Activated naive CD4-positive, alpha-beta T cell treated with anti-CD3 and anti-CD28 coated beads, Interleukin-2, amount 10 ng/mL, durations not matched to agents 7 days and 5 days (primary cell): ENCODE measurements at regions of chr2 and their contacts with region 1.

Region 1: GRCh38 chr2:105369747-105370690 is 28.8 kb downstream of the FHL2 start:
- DNase-seq: peak; percentile 93
- H3K4me3 Mint-ChIP-seq: no peak overlapping the region
- H3K27ac Mint-ChIP-seq: no peak overlapping the region
- H3K4me1 Mint-ChIP-seq: peaks cover 17% of the 10 kb centered on the region
- H3K27me3 Mint-ChIP-seq: peaks cover 8% of the 10 kb centered on the region

Region 2: GRCh38 chr2:105521205-105521604 is 151.2 kb after region 1 on chr2:
- CTCF ChIA-PET with region 1: interaction called, 65 read pairs
- DNase-seq: no peak
- H3K4me3 Mint-ChIP-seq: no peak overlapping the region
- H3K27ac Mint-ChIP-seq: no peak overlapping the region
- H3K4me1 Mint-ChIP-seq: no peaks in the 10 kb centered on the region
- H3K27me3 Mint-ChIP-seq: peaks cover 12% of the 10 kb centered on the region

Region 3: DNA sequence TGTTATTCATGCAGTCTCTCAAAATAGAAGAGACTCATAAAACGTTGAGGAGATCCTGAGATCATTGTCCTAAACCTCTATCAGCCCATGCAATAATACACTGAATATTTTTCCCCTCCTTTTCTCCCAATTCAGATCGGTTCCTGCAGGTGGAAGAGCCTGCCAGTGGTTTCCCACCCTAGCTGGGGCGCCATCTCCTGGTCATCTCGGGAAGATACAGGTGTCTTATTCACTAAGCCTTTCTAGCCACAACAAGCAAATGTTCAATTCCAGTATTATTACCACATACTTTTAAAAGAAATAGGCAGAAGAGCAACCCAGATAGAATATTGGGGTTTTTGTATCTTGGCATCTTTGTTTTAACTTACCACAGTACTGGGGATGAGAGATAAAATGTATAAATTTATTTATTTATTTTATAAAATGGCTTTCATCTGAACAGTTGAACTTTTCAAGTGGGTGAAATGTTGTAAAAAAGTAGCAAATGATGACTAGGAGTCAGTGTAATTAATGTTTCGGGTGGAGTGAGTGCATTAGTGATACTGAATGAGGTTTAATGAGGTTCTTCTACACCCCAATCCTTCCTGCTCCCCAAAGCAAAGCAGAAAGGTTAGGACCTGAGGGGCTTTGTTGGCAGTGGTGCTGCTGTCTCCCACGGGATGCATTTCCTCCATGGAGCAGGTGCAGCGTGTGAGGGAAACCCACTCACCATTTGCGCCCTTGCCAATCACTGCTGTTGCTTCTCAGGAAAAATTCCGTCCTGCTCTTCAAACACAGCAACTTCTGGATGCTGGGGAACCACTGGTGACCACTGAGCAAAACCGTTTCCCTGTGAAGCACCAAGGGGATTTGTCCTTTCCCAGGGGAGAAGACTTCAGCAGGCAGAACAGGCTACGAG is 176.0 kb after region 1 on chr2:
- CTCF ChIA-PET with region 1: interaction called, 10 read pairs
- DNase-seq: peak; percentile 81
- H3K4me3 Mint-ChIP-seq: peak overlapping the region; percentile 32
- H3K27ac Mint-ChIP-seq: peak overlapping the region; percentile 26
- H3K4me1 Mint-ChIP-seq: peaks cover 17% of the 10 kb centered on the region
- H3K27me3 Mint-ChIP-seq: peaks cover 19% of the 10 kb centered on the region